Gastrocnemius medialis (tissue), 4 donors: ENCODE measurements at regions of chr4 and their contacts with region 1.

Region 1: DNA sequence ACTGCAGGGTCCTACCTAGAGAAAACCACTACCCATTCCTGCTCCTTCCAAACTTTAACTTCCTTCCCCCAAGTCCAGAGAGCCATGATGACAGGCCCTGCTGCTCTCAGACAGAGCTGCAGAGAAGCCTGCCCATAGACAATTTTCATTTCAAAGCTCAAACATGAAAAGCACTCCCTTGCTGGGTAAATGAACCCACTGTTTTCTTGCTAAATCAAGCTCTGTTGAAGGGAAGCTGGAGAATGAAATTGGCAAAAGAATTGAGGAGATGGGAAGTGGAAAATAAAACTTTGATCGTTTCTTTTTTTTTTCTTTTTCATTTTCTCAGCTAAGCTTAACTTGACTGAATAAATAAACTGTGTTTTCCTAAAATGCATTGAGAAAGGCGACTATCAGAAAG is 331.1 kb upstream of the CPEB2 start:
- DNase-seq: no peak
- ATAC-seq: no peak
- H3K4me3 ChIP-seq: no peak overlapping the region
- H3K27ac ChIP-seq: no peak overlapping the region
- H3K4me1 ChIP-seq: no peaks in the 10 kb centered on the region
- H3K27me3 ChIP-seq: no peaks in the 10 kb centered on the region
- CTCF ChIP-seq: no peak
- POLR2A ChIP-seq: no peak

Region 2: DNA sequence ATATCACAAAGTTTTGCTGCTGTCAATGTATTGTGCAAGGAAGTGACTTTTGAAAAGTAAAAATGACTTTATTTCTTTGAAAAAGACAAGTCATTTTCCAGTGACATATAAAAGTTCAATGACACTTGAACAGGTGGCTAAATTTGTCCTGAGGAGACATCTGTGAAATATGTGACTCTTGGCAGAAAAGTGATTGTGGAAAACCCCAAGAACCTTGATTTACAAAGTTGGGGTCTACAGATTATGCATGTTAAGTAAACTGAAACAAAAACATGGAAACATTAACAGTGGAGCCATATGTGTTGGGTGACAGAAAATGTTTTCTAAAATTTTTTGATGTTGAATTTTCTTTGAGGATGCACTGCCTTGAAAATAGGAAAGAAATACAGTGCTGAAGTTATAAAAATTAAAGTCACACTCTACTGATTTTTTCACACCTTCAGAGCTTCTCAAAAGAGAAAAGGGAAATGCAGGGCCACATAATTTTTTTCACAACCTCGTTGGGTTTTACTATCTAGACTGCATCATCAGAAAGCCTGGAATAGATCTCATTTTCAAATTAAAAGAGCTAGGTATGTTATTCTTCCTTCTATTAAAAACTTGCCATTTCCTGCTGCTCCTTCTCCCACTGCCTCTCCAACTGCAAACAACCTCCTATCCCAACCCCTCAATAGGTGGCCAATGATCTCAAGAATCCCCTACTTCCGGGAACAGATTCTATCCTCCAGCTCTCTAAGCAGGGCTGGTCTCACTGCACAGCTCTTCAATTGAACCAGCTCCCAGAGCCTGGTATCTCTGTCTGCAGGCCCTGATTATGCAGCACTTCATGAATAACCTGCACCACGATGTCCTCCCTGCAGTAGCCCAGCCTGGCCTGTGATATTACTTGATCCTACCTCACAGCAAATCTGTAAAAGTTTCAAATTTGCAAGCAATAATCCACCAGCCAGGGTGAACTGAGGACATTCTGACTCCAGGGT is 239.7 kb before region 1 on chr4:
- in situ Hi-C with region 1: no loop called
- intact Hi-C with region 1: no loop called
- DNase-seq: no peak
- ATAC-seq: no peak
- H3K4me3 ChIP-seq: no peak overlapping the region
- H3K27ac ChIP-seq: no peak overlapping the region
- H3K4me1 ChIP-seq: no peaks in the 10 kb centered on the region
- H3K27me3 ChIP-seq: no peaks in the 10 kb centered on the region
- CTCF ChIP-seq: no peak
- POLR2A ChIP-seq: no peak

Region 3: DNA sequence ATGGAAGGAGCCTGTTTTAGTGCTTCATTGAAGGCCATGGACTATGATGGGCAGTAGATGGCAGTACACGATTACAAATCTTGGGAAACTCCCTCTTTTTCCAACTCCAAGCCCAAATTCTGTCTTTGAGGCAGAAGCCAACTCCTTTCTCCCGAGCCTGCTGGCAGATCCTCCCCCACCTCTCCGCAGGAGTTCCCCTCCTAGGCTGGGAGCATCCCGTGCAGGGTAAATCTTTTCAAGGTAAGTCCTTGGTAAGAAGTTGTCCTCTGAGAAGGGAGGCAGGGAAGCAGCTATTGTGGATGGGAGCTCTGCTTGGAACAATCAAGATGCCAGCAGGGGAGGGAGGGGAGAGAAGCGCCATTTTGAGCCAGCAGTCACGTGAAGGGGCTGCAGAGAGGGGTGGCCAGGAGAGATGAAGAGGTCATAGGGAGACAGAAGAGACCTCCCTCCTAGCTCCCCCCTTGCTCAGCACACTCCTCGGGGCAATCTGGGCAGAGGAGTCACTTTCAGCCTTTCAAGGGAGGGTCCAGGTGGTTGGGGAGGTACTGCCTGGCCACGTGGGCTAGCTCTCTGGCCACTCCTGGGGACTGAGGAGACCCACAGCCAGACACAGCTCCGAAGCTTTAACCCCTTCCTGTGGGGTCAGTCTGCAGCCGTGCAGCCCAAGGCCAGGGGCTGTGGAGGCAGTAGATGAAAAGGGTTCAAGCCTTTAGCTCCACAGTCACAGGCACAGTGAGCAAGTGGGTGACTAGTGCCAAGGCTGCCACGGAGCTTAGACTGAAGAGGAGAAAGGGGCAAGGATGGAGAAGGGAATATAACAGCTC is 808.2 kb after region 1 on chr4:
- in situ Hi-C with region 1: no loop called
- intact Hi-C with region 1: no loop called
- DNase-seq: peak in 1 of 2 donors; percentile 31
- ATAC-seq: peak; percentile 93 to 95
- H3K4me3 ChIP-seq: peak overlapping the region; percentile 27 to 56 (median 45)
- H3K27ac ChIP-seq: peak overlapping the region in 3 of 4 donors; percentile 12 to 63 (median 57)
- H3K4me1 ChIP-seq: no peaks in the 10 kb centered on the region
- H3K27me3 ChIP-seq: no peaks in the 10 kb centered on the region
- CTCF ChIP-seq: peak; percentile 49 to 69 (median 60)
- POLR2A ChIP-seq: no peak

Region 4: DNA sequence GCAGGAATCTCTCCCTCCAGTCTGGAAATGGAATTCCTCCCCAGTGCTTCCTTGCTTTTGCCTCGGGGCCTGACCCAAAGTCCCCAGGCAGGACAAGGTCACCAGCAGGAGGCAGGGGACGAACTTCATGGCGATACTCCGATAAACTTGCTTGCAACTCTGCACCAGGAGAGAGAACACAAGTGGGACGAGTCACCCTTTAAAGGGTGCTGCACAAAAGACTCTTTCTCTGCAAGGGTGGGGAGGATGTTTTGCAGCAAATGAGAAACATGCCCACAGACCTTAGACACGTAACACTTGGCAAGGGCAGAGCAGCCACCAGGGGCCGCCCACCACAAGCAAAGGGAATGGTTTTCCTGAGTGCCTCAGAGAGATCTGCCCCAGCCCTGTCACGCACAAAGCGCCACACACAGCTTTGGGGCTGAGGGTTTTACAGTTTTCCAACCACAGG is 1291.9 kb after region 1 on chr4 and contains the start of gene FGFBP2:
- in situ Hi-C with region 1: no loop called
- intact Hi-C with region 1: loop called (anchors 5 kb)
- DNase-seq: no peak
- ATAC-seq: no peak
- H3K4me3 ChIP-seq: no peak within 1 kb of the TSS
- H3K27ac ChIP-seq: no peak within 1 kb of the TSS
- H3K4me1 ChIP-seq: peaks cover 0 to 8% of the 10 kb centered on the region in 2 donors
- H3K27me3 ChIP-seq: no peaks in the 10 kb centered on the region
- CTCF ChIP-seq: no peak
- POLR2A ChIP-seq: no peak
- total RNA-seq, gene FGFBP2: 0.31 to 2.9 (median 1.1) TPM in 3 of 4 donors, not detected in the other